CD14-positive monocyte (primary cell): ENCODE measurements at regions of chr6 and their contacts with region 1.

Region 1: GRCh38 chr6:89371849-89372505 is 19.5 kb upstream of the UBE2J1 start:
- DNase-seq: peak; percentile 76 to 83 (median 81)
- H3K4me3 ChIP-seq: no peak overlapping the region
- H3K4me3 Mint-ChIP-seq: peak overlapping the region in 1 of 2 donors; percentile 64
- H3K27ac ChIP-seq: peak overlapping the region in 1 of 2 donors; percentile 24
- H3K27ac Mint-ChIP-seq: peak overlapping the region in 1 of 7 donors; percentile 37
- H3K4me1 ChIP-seq: peaks cover 17 to 24% of the 10 kb centered on the region in 2 donors
- H3K4me1 Mint-ChIP-seq: peaks cover 36% of the 10 kb centered on the region
- H3K27me3 ChIP-seq: no peaks in the 10 kb centered on the region
- H3K27me3 Mint-ChIP-seq: no peaks in the 10 kb centered on the region
- CTCF ChIP-seq: peak; percentile 97

Region 2: GRCh38 chr6:89270951-89271721 is 100.8 kb before region 1 on chr6:
- intact Hi-C with region 1: no loop called
- DNase-seq: peak in 2 of 3 donors; percentile 36 to 38
- H3K4me3 ChIP-seq: no peak overlapping the region
- H3K4me3 Mint-ChIP-seq: peak overlapping the region in 1 of 2 donors; percentile 71
- H3K27ac ChIP-seq: no peak overlapping the region
- H3K27ac Mint-ChIP-seq: peak overlapping the region in 2 of 7 donors; percentile 73 to 80
- H3K4me1 ChIP-seq: peaks cover 12 to 14% of the 10 kb centered on the region in 2 donors
- H3K4me1 Mint-ChIP-seq: peaks cover 15% of the 10 kb centered on the region
- H3K27me3 ChIP-seq: no peaks in the 10 kb centered on the region
- H3K27me3 Mint-ChIP-seq: peaks cover 0 to 6% (median 2%) of the 10 kb centered on the region in 3 donors
- CTCF ChIP-seq: no peak

Region 3: DNA sequence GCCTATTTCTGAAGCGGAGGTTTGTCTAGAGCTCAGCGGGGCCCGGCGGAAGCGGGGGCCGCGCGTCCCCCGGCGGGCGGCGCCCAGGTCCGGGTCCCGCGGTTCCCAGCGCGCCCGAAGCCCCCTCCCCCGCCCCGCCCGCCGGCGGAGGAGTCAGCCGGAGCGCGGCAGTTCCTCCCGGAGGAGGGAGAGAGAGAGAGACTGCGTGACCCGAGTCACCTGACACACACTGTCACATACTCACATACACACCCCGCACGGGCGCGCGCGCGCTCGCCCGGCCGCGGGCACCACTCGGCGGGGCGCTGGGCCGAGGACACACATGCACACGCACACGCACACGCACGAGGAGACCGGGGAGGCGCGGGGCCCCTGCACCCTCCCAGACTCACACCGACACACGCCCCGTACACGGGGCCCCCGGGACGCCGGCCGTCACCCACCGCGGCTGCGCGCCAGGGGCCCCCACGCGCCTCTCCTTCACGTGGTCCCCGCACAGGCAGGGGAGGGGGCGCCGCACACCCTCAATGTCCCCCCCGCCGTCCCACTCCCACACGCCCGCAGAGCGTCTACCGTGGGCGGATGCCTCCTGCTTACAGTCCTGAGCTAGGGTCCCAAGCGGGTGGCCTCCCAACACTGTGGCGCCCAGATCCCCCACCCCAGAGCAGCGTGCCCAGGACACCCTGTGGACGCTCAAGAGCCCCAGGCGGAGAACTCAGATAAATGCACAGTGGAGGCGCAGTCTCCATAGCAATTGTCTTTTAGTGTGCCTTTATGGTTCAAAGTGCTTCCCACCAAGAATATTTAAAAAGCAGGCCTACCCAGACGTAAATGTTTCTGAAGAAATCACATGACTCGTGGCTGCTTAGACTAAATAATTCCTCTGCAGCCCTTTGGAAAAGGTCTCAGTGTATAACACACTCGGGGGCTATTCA is 40.4 kb after region 1 on chr6 and contains the start of gene RRAGD:
- intact Hi-C with region 1: loop called in 1 of 2 experiments (anchors 5 kb)
- DNase-seq: peak; percentile 81 to 90 (median 83)
- H3K4me3 ChIP-seq: peak within 1 kb of the TSS; percentile 69 to 93 (median 91)
- H3K4me3 Mint-ChIP-seq: peak within 1 kb of the TSS; percentile 94 to 97
- H3K27ac ChIP-seq: peak within 1 kb of the TSS; percentile 15 to 80
- H3K27ac Mint-ChIP-seq: peak within 1 kb of the TSS; percentile 74 to 92 (median 86)
- H3K4me1 ChIP-seq: peaks cover 31 to 43% of the 10 kb centered on the region in 2 donors
- H3K4me1 Mint-ChIP-seq: peaks cover 37% of the 10 kb centered on the region
- H3K27me3 ChIP-seq: no peaks in the 10 kb centered on the region
- H3K27me3 Mint-ChIP-seq: peaks cover 0 to 14% (median 6%) of the 10 kb centered on the region in 3 donors
- CTCF ChIP-seq: no peak
- polyA plus RNA-seq, gene RRAGD: 5.0 to 7.9 (median 7.4) TPM

Region 4: GRCh38 chr6:89536231-89536630 is 164.3 kb after region 1 on chr6:
- intact Hi-C with region 1: no loop called
- DNase-seq: no peak
- H3K4me3 ChIP-seq: no peak overlapping the region
- H3K4me3 Mint-ChIP-seq: no peak overlapping the region
- H3K27ac ChIP-seq: no peak overlapping the region
- H3K27ac Mint-ChIP-seq: no peak overlapping the region
- H3K4me1 ChIP-seq: no peaks in the 10 kb centered on the region
- H3K4me1 Mint-ChIP-seq: no peaks in the 10 kb centered on the region
- H3K27me3 ChIP-seq: no peaks in the 10 kb centered on the region
- H3K27me3 Mint-ChIP-seq: peaks cover 0 to 2% (median 1%) of the 10 kb centered on the region in 3 donors
- CTCF ChIP-seq: no peak

Region 5: DNA sequence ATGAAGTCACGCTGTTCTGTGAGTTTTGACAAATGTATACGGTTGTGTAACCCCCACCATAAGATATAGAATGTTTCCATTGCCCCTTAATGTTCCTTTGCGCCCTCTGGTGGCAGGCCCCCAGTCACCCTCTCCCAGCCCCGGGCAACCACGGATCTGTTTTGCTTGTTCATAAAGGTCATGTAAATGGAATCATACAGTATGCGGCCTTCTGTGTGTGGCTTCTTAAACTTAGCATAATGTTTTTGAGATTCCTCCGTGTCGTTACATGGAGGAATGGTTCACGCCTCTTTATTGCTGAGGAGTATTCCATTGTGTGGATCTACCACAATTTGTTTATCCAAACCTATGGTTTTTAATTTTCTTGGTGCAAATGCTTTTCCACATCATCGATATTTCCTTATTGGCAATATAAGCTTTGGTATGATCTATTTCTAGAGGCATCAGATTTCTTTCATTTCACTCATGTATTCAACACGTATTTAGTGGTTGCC is 238.2 kb after region 1 on chr6:
- intact Hi-C with region 1: loop called (anchors 2 to 5 kb)
- DNase-seq: peak; percentile 52 to 70 (median 66)
- H3K4me3 ChIP-seq: no peak overlapping the region
- H3K4me3 Mint-ChIP-seq: no peak overlapping the region
- H3K27ac ChIP-seq: no peak overlapping the region
- H3K27ac Mint-ChIP-seq: no peak overlapping the region
- H3K4me1 ChIP-seq: no peaks in the 10 kb centered on the region
- H3K4me1 Mint-ChIP-seq: peaks cover 8% of the 10 kb centered on the region
- H3K27me3 ChIP-seq: no peaks in the 10 kb centered on the region
- H3K27me3 Mint-ChIP-seq: peaks cover 0 to 5% (median 1%) of the 10 kb centered on the region in 3 donors
- CTCF ChIP-seq: peak; percentile 97